Ascending aorta (tissue), 2 donors: ENCODE measurements at regions of chr15 and their contacts with region 1.

Region 1: DNA sequence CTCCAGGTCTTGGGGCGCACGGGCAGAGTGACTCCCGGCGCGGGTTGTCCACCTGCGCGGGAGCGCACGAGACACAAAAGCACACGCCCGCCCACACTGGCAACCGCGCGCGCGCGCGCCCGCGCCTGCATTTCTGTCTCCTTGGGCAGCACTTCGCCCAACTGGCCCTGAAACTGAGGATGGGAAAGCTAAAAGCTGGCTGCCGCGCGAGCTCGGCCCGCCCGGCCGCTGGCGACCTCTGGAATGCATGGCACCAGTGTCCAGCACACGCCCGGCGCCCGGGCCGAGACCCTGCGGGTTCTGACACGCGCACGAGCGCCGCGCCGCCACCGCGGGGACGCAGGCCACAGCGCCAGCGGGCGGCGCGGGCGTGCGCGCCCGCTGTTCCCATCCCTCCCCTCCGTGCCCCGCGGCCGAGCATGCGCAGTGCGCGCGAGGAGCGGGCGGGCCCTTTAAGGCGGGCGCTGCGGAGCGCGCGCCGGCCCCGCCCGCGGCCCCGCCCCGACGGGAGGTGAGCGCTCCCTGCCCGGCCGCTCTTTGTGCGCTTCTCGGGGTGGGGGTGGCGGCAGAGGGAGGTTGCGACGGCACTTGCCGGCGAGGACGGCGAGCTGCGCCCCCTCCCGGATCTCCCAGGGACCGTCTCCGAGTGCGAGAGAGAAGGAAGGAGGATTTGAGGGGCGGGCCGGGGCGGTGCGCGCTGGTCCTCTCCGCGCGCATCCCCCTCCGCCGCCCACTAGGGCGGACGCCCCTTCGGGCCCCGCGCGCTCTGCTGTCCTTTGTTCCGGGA is 1.0 kb upstream of the MEX3B start:
- DNase-seq: peak; percentile 45 to 93
- H3K4me3 ChIP-seq: peak overlapping the region; percentile 86 to 95
- H3K27ac ChIP-seq: peak overlapping the region; percentile 83 to 88
- H3K4me1 ChIP-seq: peaks cover 0 to 6% of the 10 kb centered on the region in 2 donors
- H3K27me3 ChIP-seq: no peaks in the 10 kb centered on the region
- CTCF ChIP-seq: peak; percentile 68 to 72 (median 71)

Region 2: GRCh38 chr15:80695104-80695910 is 1351.6 kb before region 1 on chr15 and contains the start of gene ABHD17C:
- intact Hi-C with region 1: loop called (anchors 10 kb)
- DNase-seq: peak in 1 of 2 donors; percentile 69
- H3K4me3 ChIP-seq: peak within 1 kb of the TSS; percentile 80 to 85
- H3K27ac ChIP-seq: peak within 1 kb of the TSS; percentile 81 to 82
- H3K4me1 ChIP-seq: peaks cover 0 to 10% of the 10 kb centered on the region in 2 donors
- H3K27me3 ChIP-seq: no peaks in the 10 kb centered on the region
- CTCF ChIP-seq: no peak
- total RNA-seq, gene ABHD17C: 0.96 TPM

Region 3: DNA sequence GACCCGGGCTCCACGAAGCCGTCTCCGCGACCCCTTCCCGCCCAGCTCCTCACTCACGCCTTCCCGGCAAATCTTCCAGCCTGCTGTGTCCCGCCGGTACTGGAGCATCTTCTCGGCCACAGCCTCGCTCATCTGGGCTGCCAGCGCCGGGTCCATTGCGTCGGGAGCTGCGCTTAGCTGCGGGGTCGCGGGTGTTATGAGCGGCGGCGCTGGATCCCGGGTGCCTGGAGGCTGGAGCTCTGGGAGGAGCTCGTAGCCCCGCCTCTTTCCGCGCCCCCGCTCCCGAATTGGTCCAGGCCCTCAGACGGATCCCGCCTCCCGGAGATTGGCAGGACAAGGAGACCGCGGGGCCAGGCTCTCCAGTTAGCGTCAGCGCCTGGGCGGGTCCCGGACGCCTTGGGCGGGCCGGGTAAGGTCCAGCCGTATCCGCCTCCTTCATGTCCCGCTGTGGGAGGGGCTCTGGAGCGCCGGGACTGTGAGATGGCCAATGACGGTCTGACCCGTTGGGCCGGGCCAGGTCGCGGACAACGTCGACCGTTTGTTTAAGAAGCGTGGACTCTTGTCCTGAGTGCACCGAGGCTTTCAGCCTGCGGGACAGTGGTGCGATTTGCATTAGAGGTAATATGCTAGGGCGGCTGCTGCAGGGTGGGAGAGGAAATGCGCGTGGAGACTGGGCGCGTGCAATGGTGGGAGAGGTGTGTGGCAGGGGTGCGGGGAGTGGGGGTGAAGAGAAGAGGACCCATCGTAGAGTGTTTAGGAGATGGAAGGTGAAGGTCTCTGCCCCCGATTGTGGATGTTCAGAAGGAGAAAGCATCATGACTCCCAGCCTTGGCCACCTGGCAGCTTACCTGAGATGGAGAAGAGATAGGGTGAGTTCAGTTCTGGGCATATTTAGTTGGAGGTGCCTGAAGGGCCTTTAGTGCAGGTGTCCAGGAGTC is 722.6 kb before region 1 on chr15 and contains the start of gene STARD5:
- intact Hi-C with region 1: loop called (anchors 10 kb)
- DNase-seq: peak; percentile 96 to 100
- H3K4me3 ChIP-seq: peak within 1 kb of the TSS; percentile 68 to 76
- H3K27ac ChIP-seq: peak within 1 kb of the TSS; percentile 49 to 71
- H3K4me1 ChIP-seq: peaks cover 5 to 7% of the 10 kb centered on the region in 2 donors
- H3K27me3 ChIP-seq: no peaks in the 10 kb centered on the region
- CTCF ChIP-seq: no peak
- total RNA-seq, gene STARD5: 4.8 TPM

Region 4: DNA sequence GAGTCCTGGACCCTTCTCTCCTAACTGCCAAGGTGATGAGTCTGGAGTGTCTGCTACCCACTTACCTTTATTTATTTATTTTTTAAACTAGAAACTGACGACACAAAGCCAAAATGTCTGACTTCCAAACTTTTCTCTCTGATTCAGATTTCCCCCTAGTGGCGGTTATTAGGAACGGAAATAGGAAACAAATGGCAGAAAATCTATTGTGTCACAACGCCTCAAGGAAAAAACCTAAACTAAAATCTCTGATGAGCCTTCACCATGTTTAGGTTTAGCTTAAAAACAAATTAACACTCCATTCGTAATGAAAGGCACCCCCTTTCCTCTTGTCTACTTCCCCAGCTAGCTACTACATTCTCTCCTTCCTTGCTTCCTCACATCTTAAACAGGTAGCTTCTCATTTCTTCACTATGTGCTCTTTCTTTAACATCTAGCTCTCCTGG is 93.0 kb after region 1 on chr15:
- intact Hi-C with region 1: loop called (anchors 5 kb)
- DNase-seq: no peak
- H3K4me3 ChIP-seq: no peak overlapping the region
- H3K27ac ChIP-seq: no peak overlapping the region
- H3K4me1 ChIP-seq: no peaks in the 10 kb centered on the region
- H3K27me3 ChIP-seq: no peaks in the 10 kb centered on the region
- CTCF ChIP-seq: peak; percentile 40 to 69 (median 56)

Region 5: DNA sequence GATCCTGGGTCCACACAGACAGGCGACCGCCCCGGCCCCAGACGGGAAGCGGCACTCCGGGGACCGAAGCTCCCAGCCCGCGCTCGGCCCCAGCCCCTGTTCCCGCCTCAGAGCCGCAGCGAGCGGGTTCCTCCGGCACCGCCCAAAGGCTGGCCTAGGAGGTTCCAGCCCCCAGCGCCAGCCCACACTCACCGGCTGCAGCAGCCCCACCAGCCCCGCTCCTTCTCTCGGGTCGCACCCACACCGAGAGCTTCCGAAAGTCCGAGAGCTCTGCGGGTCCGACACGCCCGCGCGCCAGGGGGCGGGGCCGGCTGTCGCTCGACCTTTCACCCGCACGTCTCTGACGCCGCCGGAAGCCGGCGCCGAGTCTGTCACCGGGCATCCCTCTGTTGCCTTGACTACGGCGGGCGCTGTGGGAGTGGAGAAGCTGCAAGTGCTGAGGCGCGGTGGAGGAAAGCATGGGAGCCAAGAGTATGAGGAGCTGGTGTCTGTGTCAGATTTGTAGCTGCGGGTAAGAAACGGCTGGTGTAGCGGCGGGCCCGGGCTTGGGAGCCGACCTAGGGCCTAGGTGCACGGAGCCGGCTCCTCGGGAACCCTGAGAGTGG is 215.7 kb after region 1 on chr15 and contains the starts of genes EFL1 and SAXO2:
- intact Hi-C with region 1: loop called (anchors 2 kb)
- DNase-seq: peak; percentile 77 to 96
- H3K4me3 ChIP-seq: peak within 1 kb of the TSS; percentile 82 to 89
- H3K27ac ChIP-seq: peak within 1 kb of the TSS; percentile 68 to 71
- H3K4me1 ChIP-seq: peaks cover 2 to 18% of the 10 kb centered on the region in 2 donors
- H3K27me3 ChIP-seq: no peaks in the 10 kb centered on the region
- CTCF ChIP-seq: no peak
- total RNA-seq, gene EFL1: 17.3 TPM
- total RNA-seq, gene SAXO2: not detected

Region 6: GRCh38 chr15:82828075-82828474 is 781.2 kb after region 1 on chr15:
- intact Hi-C with region 1: no loop called
- DNase-seq: no peak
- H3K4me3 ChIP-seq: no peak overlapping the region
- H3K27ac ChIP-seq: no peak overlapping the region
- H3K4me1 ChIP-seq: peaks cover 0 to 11% of the 10 kb centered on the region in 2 donors
- H3K27me3 ChIP-seq: no peaks in the 10 kb centered on the region
- CTCF ChIP-seq: no peak